Activated CD8-positive, alpha-beta T cell treated with anti-CD3 and anti-CD28 coated beads, Interleukin-2, amount 10 ng/mL, durations not matched to agents 7 days and 5 days (primary cell): ENCODE measurements at regions of chr22 and their contacts with region 1.

Region 1: DNA sequence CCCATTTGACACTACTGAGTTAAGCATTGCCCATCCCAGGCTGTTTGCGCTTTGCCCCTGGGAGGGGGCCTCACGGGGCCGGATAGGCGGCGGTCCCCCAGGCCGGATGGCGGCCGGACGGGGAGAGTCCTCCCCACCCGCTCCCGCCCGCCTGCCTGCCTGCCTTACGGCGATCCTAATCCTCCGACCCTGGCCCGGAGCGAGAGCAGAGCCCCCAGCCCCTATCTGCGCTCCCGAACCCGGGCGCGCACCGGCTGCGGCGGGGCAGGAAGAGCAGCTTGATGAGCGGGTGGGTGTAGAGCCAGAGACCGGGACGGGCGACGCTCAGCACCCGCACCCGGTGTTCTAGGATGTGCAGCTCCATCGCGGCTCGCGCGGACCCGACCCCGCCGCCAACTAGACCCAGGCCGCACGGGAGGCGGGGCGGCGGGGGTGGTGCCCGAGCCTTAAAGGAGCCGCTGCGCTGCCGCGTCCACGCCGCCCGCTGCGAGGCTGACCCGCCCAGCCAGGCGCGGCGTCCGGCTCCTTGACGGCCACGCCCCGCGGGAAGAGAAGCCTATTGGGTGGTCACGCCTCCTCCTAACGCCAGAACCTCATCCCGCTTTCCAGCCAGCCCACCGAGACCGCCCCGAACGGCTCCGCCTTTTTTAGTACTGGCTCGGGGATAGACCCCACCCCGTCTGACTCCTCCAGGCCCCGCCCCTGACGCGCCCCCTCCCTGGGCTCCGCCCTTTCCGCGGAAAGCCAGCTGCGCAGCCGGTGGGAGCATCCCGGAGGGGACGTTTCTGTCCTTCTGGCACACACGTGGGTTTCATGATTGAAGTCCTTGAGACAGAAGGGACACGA is at the start of gene CASTOR1:
- DNase-seq: peak; percentile 95
- ATAC-seq: peak; percentile 83
- H3K4me3 Mint-ChIP-seq: peak within 1 kb of the TSS; percentile 80
- H3K27ac Mint-ChIP-seq: peak within 1 kb of the TSS; percentile 86
- H3K4me1 Mint-ChIP-seq: peaks cover 60% of the 10 kb centered on the region
- H3K27me3 Mint-ChIP-seq: no peaks in the 10 kb centered on the region
- total RNA-seq, gene CASTOR1: 24.5 to 25.4 TPM

Region 2: GRCh38 chr22:29964776-29965175 is 324.6 kb before region 1 on chr22:
- CTCF ChIA-PET with region 1: no interaction called
- POLR2A ChIA-PET with region 1: no interaction called
- DNase-seq: no peak
- ATAC-seq: no peak
- H3K4me3 Mint-ChIP-seq: no peak overlapping the region
- H3K27ac Mint-ChIP-seq: no peak overlapping the region
- H3K4me1 Mint-ChIP-seq: peaks cover 2% of the 10 kb centered on the region
- H3K27me3 Mint-ChIP-seq: no peaks in the 10 kb centered on the region

Region 3: GRCh38 chr22:29994027-29994715 is 295.2 kb before region 1 on chr22:
- CTCF ChIA-PET with region 1: no interaction called
- POLR2A ChIA-PET with region 1: no interaction called
- DNase-seq: no peak
- ATAC-seq: no peak
- H3K4me3 Mint-ChIP-seq: no peak overlapping the region
- H3K27ac Mint-ChIP-seq: no peak overlapping the region
- H3K4me1 Mint-ChIP-seq: no peaks in the 10 kb centered on the region
- H3K27me3 Mint-ChIP-seq: no peaks in the 10 kb centered on the region

Region 4: GRCh38 chr22:30044369-30044768 is 245.0 kb before region 1 on chr22:
- CTCF ChIA-PET with region 1: no interaction called
- POLR2A ChIA-PET with region 1: no interaction called
- DNase-seq: no peak
- ATAC-seq: no peak
- H3K4me3 Mint-ChIP-seq: no peak overlapping the region
- H3K27ac Mint-ChIP-seq: no peak overlapping the region
- H3K4me1 Mint-ChIP-seq: peaks cover 11% of the 10 kb centered on the region
- H3K27me3 Mint-ChIP-seq: peaks cover 7% of the 10 kb centered on the region

Region 5: DNA sequence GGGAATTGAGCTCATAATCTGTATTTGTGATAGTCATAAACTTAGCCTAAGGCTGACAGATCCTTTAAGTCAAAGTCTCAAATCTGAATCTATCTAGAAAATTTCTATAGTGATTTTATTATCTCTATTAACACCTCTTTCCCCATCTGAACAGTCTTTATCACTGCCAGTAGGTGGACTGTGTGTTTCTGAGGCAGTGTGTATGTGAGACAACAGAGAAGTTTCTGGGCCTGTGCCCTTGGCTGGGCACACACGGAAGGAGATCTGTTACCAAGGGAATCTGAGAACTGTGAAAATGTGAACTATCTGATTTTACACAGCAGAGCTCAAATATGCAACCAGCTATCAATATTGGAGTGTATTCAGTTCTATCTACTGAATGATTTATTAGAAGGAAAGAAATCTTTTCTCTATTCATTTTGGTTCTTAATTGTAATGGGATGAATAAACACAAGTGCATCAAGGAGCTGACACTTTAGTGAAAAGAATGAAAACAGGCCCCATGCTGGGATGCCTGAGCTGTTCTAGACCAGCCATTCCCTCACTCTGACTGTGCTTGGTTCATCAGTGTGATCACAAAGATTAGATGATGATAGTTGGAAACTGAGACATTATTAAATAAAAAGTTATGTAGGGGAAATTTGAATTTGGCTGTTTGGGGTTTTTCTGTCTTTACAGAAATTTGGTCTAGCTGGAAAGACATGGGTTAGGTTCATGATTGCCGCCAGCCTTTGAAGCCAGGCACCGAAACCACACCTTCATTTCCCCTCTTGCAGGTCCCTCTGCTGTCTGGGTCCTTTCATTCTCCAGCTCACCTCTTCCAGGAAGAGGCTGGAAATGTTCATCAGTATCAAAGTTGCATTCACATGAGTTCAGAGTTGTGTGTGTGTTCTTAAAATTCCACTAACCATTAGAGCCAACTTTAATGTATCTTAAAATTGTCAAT is 110.9 kb before region 1 on chr22:
- CTCF ChIA-PET with region 1: interaction called, 13 read pairs
- POLR2A ChIA-PET with region 1: no interaction called
- DNase-seq: peak; percentile 74
- ATAC-seq: peak; percentile 82
- H3K4me3 Mint-ChIP-seq: peak overlapping the region; percentile 35
- H3K27ac Mint-ChIP-seq: peak overlapping the region; percentile 93
- H3K4me1 Mint-ChIP-seq: peaks cover 88% of the 10 kb centered on the region
- H3K27me3 Mint-ChIP-seq: no peaks in the 10 kb centered on the region

Region 6: DNA sequence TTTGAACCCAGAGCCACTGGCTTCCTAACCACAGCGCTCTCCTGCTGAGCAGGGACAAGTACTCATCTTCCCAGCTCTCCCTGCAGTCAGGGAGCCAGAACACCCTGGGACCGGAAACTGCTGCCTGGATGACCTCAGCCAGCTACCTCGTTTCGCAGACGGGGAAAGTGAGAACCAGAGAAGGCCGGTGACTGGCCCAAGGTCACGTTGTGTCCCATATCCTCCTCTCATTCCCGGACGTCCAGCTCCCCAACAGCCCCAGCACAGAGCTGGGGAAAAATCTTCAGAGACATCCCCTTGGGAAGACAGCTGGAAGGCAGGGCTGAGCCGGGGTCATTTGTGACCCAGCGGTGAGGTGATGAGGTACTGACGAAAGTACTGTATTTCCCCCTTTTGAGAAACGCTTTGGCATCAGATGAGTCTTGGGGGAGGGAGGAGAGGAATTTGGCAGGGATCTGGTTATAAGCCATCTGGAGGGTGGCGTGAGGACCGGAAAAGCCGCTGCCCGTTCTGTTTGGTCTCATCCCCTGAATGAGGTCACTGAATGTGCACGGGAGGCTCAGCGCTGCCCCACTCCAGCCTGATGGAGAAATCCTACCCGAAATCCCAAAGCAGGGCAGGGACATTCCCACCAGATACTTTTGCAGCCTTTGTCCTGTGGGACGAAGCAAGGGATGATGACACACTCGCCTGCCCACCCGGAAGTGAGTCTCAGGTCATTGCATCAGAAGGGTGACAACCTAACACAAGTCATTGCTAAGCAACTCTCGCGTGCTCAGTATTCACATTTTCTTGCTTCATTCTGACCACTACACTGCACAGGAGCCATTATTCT is 83.9 kb before region 1 on chr22:
- CTCF ChIA-PET with region 1: no interaction called
- POLR2A ChIA-PET with region 1: no interaction called
- DNase-seq: no peak
- ATAC-seq: no peak
- H3K4me3 Mint-ChIP-seq: no peak overlapping the region
- H3K27ac Mint-ChIP-seq: peak overlapping the region; percentile 77
- H3K4me1 Mint-ChIP-seq: peaks cover 64% of the 10 kb centered on the region
- H3K27me3 Mint-ChIP-seq: no peaks in the 10 kb centered on the region

Region 7: DNA sequence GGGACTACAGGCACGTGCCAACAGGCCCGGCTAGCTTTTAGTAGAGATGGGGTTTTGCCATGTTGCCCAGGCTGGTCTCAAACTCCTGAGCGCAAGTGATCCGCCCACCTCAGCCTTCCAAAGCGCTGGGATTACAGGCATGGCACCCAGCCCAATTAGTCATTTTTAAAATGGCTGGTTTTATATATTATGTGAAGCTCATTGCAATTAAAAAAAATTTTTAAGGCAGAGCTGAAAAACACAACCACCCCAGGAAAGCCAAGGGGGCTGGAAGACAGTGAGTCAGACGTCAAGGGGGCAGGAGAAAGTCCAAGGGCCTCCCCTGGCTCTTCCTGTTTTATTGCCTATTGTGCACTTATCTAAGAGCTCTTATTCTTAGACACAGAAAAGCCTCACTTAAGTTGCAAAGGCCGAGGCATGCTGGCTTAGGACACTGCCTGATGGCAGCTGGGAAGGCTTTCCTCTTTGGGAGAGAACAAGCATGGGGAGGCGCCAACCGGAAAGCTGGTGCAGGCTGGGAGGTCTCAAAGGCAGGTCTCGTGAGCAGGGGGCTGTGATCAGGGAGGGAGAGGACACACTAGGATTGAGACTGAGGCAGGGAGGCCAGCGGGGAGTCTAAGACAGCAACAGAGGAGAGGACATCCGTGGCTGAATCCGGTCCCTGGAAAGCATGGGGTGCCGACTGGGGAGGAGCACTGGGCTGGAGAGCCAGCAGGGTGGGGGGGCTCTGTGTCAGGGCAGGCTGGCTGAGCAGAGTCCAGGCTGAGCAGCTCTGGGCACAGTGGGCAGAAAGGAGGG is 11.6 kb before region 1 on chr22:
- CTCF ChIA-PET with region 1: interaction called, 37 read pairs
- POLR2A ChIA-PET with region 1: no interaction called
- DNase-seq: no peak
- ATAC-seq: no peak
- H3K4me3 Mint-ChIP-seq: no peak overlapping the region
- H3K27ac Mint-ChIP-seq: peak overlapping the region; percentile 48
- H3K4me1 Mint-ChIP-seq: peaks cover 66% of the 10 kb centered on the region
- H3K27me3 Mint-ChIP-seq: peaks cover 1% of the 10 kb centered on the region

Region 8: GRCh38 chr22:30326706-30327362 is 37.5 kb after region 1 on chr22 and contains the start of gene TBC1D10A:
- CTCF ChIA-PET with region 1: interaction called, 55 read pairs
- POLR2A ChIA-PET with region 1: interaction called, 50 read pairs
- DNase-seq: peak; percentile 95
- ATAC-seq: peak; percentile 91
- H3K4me3 Mint-ChIP-seq: peak within 1 kb of the TSS; percentile 87
- H3K27ac Mint-ChIP-seq: peak within 1 kb of the TSS; percentile 76
- H3K4me1 Mint-ChIP-seq: peaks cover 47% of the 10 kb centered on the region
- H3K27me3 Mint-ChIP-seq: no peaks in the 10 kb centered on the region
- total RNA-seq, gene TBC1D10A: 47.6 to 49.2 TPM

Region 9: DNA sequence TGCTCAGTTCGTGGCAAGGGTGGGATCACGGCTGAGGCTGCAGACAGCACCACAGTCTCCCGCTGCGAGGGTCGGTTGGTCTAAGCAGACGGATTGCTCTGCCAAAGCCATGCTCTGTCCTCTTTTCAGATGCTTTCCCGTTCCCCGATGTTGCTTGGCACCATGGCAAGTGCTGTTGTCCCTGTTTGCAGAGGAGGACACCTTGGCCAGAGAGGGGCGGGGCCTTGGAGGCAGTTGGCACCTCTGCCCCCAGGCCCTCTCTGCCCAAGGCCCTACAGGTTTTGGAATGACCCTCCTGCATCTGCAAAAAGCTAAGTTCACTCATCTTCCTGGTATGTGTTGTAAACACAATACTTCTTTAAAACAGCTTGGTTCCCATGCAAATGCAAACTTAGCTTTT is 79.1 kb after region 1 on chr22:
- CTCF ChIA-PET with region 1: interaction called, 11 read pairs
- POLR2A ChIA-PET with region 1: no interaction called
- DNase-seq: no peak
- ATAC-seq: no peak
- H3K4me3 Mint-ChIP-seq: no peak overlapping the region
- H3K27ac Mint-ChIP-seq: no peak overlapping the region
- H3K4me1 Mint-ChIP-seq: no peaks in the 10 kb centered on the region
- H3K27me3 Mint-ChIP-seq: no peaks in the 10 kb centered on the region

Region 10: GRCh38 chr22:30423982-30424963 is 134.9 kb after region 1 on chr22:
- CTCF ChIA-PET with region 1: interaction called, 50 read pairs
- POLR2A ChIA-PET with region 1: no interaction called
- DNase-seq: peak; percentile 100
- ATAC-seq: peak; percentile 91
- H3K4me3 Mint-ChIP-seq: peak overlapping the region; percentile 97
- H3K27ac Mint-ChIP-seq: peak overlapping the region; percentile 97
- H3K4me1 Mint-ChIP-seq: peaks cover 53% of the 10 kb centered on the region
- H3K27me3 Mint-ChIP-seq: no peaks in the 10 kb centered on the region